ENCODE measurements at regions of chr6 and their contacts with region 1.

Region 1: GRCh38 chr6:48866681-48867080 is 596.4 kb downstream of the MMUT start:
- DNase-seq: no peak
- ATAC-seq: no peak
- H3K4me3 ChIP-seq: no peak overlapping the region
- H3K27ac ChIP-seq: no peak overlapping the region
- H3K4me1 ChIP-seq: no peaks in the 10 kb centered on the region
- H3K27me3 ChIP-seq: no peaks in the 10 kb centered on the region
- CTCF ChIP-seq: no peak

Region 2: GRCh38 chr6:48757661-48758060 is 109.0 kb before region 1 on chr6:
- CTCF ChIA-PET with region 1: no interaction called
- POLR2A ChIA-PET with region 1: no interaction called
- in situ Hi-C with region 1: no loop called
- intact Hi-C with region 1: no loop called
- DNase-seq: no peak
- ATAC-seq: no peak
- H3K4me3 ChIP-seq: no peak overlapping the region
- H3K27ac ChIP-seq: no peak overlapping the region
- H3K4me1 ChIP-seq: no peaks in the 10 kb centered on the region
- H3K27me3 ChIP-seq: no peaks in the 10 kb centered on the region
- CTCF ChIP-seq: no peak

Region 3: DNA sequence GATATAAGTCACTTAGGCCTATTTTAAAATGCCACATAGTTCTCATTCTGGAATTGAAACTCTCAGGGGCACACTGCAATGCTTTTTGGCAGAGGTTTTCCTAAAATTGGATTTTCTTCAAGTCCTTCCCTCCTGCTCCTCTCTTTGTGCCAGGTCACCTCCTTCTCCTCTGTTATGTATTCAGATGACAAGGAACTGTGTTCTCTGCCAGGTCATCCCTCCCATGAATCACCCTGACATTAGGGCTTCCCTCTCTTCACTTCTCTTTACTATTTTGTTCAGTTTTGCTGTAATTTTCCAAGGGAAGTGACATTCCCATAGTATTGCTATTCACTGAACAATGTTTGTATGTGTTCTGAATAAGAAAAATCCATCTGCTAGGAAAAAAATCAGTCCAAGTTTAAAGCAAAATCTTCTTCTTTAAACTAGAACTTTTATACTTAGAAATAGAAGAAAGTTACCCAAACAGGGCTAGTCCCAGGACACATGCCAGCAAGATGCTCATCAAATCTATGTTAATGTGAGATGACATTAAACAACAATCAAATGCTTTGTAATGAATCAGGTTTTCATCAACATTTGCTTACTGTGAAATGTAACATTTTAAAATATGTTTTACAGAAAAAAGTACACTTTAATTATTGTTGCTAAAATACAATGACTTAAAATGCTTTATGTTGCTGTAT is 135.3 kb after region 1 on chr6:
- CTCF ChIA-PET with region 1: no interaction called
- POLR2A ChIA-PET with region 1: no interaction called
- in situ Hi-C with region 1: no loop called
- intact Hi-C with region 1: no loop called
- DNase-seq: no peak
- ATAC-seq: no peak
- H3K4me3 ChIP-seq: no peak overlapping the region
- H3K27ac ChIP-seq: no peak overlapping the region
- H3K4me1 ChIP-seq: no peaks in the 10 kb centered on the region
- H3K27me3 ChIP-seq: no peaks in the 10 kb centered on the region
- CTCF ChIP-seq: no peak

Region 4: DNA sequence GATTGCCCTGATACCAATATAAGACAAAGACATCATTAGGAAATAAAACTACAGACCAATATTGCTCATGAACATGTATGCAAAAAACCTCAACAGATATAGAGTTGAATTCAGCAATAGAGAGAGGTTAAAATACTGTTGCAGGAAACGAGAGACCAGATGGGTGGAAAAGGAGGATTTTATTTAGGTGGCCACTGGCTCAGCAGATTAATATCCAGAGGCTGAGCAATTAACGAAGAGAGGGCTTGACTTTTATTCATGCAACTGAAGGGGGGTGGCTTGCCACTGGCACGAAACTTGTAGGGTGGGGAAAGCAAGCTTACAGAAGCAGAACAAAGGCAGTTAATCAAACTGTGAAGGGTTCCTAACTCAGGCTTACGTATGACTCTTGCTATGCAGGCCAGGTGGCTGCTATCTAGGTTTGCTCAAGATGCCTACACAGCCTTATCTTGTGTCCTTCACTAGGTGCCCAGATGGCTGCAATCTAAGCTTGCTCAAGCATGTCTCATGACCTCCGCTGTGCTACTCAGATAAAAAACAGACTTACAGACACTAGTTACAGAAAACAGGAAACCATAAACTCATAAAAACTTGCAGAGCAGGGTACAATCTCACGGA is 469.9 kb after region 1 on chr6:
- CTCF ChIA-PET with region 1: no interaction called
- POLR2A ChIA-PET with region 1: interaction called, 12 read pairs
- in situ Hi-C with region 1: no loop called
- intact Hi-C with region 1: no loop called
- DNase-seq: no peak
- ATAC-seq: no peak
- H3K4me3 ChIP-seq: no peak overlapping the region
- H3K27ac ChIP-seq: no peak overlapping the region
- H3K4me1 ChIP-seq: no peaks in the 10 kb centered on the region
- H3K27me3 ChIP-seq: no peaks in the 10 kb centered on the region
- CTCF ChIP-seq: no peak

Measured in Panc1 (cell line).